GM12878 (cell line): ENCODE measurements at regions of chr4 and their contacts with region 1.

Region 1: GRCh38 chr4:1683736-1684505 is at the start of gene FAM53A:
- DNase-seq: peak; percentile 36
- ATAC-seq: peak; percentile 95
- H3K4me3 ChIP-seq: peak within 1 kb of the TSS; percentile 65
- H3K27ac ChIP-seq: no peak within 1 kb of the TSS
- H3K4me1 ChIP-seq: peaks cover 11% of the 10 kb centered on the region
- H3K27me3 ChIP-seq: no peaks in the 10 kb centered on the region
- CTCF ChIP-seq: no peak
- EP300 ChIP-seq: no peak
- POLR2A ChIP-seq: peak; percentile 76
- RAD21 ChIP-seq: no peak
- polyA plus RNA-seq, gene FAM53A: 0.02 TPM in 1 of 2 experiments, not detected in the other

Region 2: DNA sequence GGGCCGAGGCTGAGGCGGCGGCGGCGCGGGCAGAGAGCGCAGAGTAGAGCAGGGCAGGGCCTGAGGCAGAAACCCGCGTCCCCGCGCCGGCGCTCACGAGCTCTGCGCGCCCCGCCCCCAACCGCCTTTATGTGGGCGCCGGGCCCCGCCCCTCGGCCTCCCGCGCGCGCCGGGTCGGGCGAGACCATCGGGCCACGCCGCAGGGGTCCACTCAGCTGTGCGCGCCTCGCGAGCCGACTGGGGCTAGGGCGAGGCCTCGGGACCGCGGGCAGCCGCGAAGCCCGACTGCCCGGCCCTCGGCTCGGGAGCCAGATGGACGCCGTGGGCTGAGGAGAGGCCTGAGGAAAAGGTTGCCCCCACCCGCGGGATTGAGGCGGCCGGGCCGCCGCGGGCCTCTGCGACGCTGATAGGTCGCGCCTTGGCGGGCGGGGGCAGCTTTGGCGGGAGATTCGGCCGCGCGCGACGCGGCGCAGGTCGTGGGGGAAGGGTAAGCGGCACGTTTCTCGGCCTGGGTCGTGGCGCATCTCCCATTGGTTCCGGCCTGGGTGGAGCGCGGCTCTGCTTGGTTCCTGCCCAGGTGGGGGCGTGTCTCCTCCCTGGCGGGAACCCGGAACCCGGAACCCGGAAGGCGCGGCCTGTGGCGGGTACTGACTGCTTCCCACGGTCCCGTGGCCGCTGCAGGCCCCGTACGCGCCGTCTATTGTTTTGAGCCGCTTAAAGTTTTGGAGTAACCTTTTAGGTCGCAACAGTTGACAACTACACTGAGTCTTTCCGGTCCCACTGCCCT is 28.5 kb after region 1 on chr4 and contains the start of gene SLBP:
- CTCF ChIA-PET with region 1: interaction called, 258 read pairs
- POLR2A ChIA-PET with region 1: interaction called, 3 read pairs
- RAD21 ChIA-PET with region 1: no interaction called
- SMC1A ChIA-PET with region 1: no interaction called
- in situ Hi-C with region 1: no loop called
- intact Hi-C with region 1: loop called (anchors 2 kb)
- DNase-seq: peak; percentile 90
- ATAC-seq: peak; percentile 85
- H3K4me3 ChIP-seq: peak within 1 kb of the TSS; percentile 100
- H3K27ac ChIP-seq: peak within 1 kb of the TSS; percentile 99
- H3K4me1 ChIP-seq: peaks cover 31% of the 10 kb centered on the region
- H3K27me3 ChIP-seq: no peaks in the 10 kb centered on the region
- CTCF ChIP-seq: no peak
- EP300 ChIP-seq: no peak
- POLR2A ChIP-seq: no peak
- RAD21 ChIP-seq: no peak
- polyA plus RNA-seq, gene SLBP: 94.4 to 101 TPM